Endothelial cell of umbilical vein (primary cell): ENCODE measurements at regions of chr6 and their contacts with region 1.

Region 1: DNA sequence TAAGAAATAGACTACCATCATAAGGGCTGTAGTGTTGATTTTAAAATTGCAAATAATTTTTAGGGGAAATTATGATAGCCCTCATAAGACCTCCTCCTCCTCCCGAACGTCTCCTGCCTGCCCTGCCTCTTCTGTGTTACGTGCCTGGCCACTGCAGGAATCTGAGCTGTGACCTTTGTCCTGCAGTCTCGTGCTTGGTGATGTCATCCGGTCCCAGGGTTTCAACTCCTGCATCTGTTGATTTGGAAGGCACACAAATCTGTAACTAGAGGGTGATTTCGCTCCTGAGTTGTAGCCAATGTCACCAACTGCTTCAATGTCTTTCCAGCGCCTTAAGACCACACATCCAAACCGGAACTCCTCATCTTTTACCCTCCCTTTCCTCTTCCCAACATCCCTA is 163.2 kb downstream of the AIG1 start:
- DNase-seq: no peak
- H3K4me3 ChIP-seq: no peak overlapping the region
- H3K27ac ChIP-seq: peak overlapping the region; percentile 32
- H3K4me1 ChIP-seq: peaks cover 10% of the 10 kb centered on the region
- H3K27me3 ChIP-seq: no peaks in the 10 kb centered on the region
- CTCF ChIP-seq: no peak
- POLR2A ChIP-seq: no peak

Region 2: GRCh38 chr6:143205991-143206390 is 17.9 kb before region 1 on chr6:
- CTCF ChIA-PET with region 1: no interaction called
- POLR2A ChIA-PET with region 1: no interaction called
- dilution Hi-C with region 1: no loop called
- intact Hi-C with region 1: no loop called
- DNase-seq: no peak
- H3K4me3 ChIP-seq: no peak overlapping the region
- H3K27ac ChIP-seq: no peak overlapping the region
- H3K4me1 ChIP-seq: no peaks in the 10 kb centered on the region
- H3K27me3 ChIP-seq: no peaks in the 10 kb centered on the region
- CTCF ChIP-seq: no peak
- POLR2A ChIP-seq: no peak

Region 3: GRCh38 chr6:143325379-143326140 is 101.7 kb after region 1 on chr6:
- CTCF ChIA-PET with region 1: no interaction called
- POLR2A ChIA-PET with region 1: no interaction called
- dilution Hi-C with region 1: no loop called
- intact Hi-C with region 1: loop called (anchors 5 kb)
- DNase-seq: peak; percentile 82
- H3K4me3 ChIP-seq: no peak overlapping the region
- H3K27ac ChIP-seq: peak overlapping the region; percentile 33
- H3K4me1 ChIP-seq: peaks cover 14% of the 10 kb centered on the region
- H3K27me3 ChIP-seq: no peaks in the 10 kb centered on the region
- CTCF ChIP-seq: no peak
- POLR2A ChIP-seq: peak; percentile 18